Mammary epithelial cell (primary cell): ENCODE measurements at regions of chr1 and their contacts with region 1.

Region 1: DNA sequence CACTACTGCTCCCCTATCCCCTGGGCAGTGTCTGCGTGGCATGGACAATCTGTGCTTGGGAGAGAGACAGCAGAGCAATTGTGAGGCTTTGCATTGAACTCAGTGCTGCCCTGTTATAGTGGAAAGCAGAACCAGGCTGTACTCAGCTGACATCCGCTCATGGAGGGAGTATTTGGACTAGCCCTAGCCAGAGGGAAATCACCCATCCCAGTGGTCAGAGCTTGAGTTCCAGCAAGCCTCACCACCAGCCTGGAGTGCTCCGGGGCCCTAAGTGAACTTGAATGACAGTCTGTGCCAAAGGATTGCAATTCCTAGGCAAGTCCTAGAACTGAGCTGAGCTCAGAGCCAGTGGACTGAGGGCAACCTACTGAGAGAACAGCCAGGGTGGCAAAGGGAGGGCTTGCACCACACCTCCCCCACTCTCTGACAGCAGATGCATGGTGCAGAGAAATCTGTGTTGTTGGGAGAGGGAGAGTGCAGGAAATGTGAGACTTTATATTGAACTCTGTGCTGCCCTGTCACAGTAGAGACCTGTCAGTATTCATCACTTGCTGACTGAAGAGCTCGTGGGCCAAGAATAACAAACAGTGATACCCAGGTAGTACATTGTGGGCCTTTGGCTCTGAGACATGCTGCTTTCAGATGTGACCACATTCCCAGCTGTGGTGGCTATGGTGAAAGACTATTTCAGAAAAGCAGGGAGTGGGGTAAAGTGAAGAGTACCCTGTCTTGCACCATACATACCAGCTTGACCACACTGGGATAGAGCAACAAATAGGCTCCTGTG is 107.7 kb upstream of the SLC5A9 start:
- DNase-seq: peak; percentile 58
- H3K4me3 ChIP-seq: no peak overlapping the region
- H3K27ac ChIP-seq: no peak overlapping the region
- H3K4me1 ChIP-seq: no peaks in the 10 kb centered on the region
- H3K27me3 ChIP-seq: peaks cover 8% of the 10 kb centered on the region
- CTCF ChIP-seq: no peak

Region 2: DNA sequence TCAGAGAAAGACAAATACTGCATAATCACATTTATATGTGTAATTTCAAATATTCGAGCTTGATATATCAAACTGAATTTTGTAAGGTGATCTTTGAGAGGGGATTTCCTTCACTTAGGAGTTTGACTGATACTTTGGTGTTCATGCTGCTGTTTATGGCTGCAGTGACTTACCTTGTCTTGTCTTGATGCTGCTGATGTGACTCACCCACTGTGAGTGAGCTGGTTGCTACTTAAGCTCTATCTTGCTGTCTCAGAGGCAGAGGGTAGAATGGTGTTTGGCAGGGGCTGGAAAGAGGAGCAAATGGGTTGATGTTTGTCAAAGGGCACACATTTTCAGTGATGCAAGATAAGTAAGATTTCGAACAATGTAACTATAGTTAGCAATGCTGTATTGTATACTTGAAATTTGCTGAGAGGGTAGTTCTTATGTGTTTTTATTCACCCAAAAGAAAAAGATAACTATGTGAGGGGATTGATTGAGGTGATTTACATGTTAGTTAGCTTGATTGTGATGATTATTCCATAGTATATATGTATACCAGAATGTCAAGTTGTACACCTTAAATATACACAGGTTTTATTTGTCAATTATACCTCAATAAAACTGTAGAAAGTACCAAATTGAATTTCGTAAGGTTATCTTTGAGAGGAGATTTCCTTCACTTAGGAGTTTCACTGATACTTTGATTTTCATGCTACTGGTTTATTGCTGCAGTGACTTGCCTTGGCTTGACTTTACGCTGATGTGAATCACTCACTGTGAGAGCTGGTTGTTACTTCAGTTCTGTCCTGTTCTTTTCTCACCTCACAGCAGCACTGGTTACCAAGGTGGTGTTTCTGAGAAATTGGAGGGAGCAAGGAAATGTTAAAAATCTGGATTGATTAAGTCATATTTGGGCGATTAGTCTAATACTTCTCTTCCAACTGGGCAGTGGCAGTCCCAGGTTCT is 13.2 kb after region 1 on chr1:
- CTCF ChIA-PET with region 1: interaction called, 11 read pairs
- dilution Hi-C with region 1: no loop called
- in situ Hi-C with region 1: no loop called
- intact Hi-C with region 1: no loop called
- DNase-seq: peak; percentile 84
- H3K4me3 ChIP-seq: no peak overlapping the region
- H3K27ac ChIP-seq: no peak overlapping the region
- H3K4me1 ChIP-seq: no peaks in the 10 kb centered on the region
- H3K27me3 ChIP-seq: peaks cover 4% of the 10 kb centered on the region
- CTCF ChIP-seq: no peak